T-cell (primary cell): ENCODE measurements at regions of chr12 and their contacts with region 1.

Region 1: DNA sequence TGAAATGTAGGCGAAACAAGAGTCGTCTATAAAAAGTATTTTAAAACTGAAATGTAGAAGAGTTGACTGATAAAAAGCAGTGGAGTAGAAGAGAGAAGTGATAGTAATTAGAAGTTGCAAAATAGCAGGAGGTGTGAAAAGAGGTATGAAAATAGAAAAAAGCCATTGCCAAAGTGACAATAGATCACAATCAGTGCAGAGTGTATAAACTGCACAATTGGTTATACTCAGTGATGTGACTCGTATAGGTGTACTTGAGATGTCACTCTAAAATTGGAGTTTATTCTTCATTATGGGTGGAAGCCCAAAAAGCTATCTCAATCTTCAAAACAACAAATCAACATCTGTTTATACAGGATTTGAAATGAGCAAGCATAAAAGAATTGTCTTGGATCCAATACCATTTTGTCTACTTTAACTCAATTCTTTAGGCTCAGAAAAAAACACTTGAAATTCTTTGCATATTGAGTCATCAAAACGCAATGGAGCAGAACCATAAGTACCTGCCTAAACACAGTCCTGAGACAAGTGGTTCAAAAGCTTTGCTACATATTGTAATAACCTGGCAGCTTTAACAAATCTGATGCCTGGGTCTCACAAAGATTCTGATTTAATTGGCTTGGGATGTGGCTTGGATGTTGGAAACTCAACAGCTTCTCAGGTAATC is 8.8 kb downstream of the IKBIP start:
- DNase-seq: no peak
- ATAC-seq: no peak
- H3K4me3 ChIP-seq: no peak overlapping the region
- H3K4me3 Mint-ChIP-seq: no peak overlapping the region
- H3K27ac ChIP-seq: no peak overlapping the region
- H3K27ac Mint-ChIP-seq: no peak overlapping the region
- H3K4me1 ChIP-seq: no peaks in the 10 kb centered on the region
- H3K4me1 Mint-ChIP-seq: peaks cover 3 to 7% (median 4%) of the 10 kb centered on the region in 3 donors
- H3K27me3 ChIP-seq: no peaks in the 10 kb centered on the region
- H3K27me3 Mint-ChIP-seq: no peaks in the 10 kb centered on the region

Region 2: DNA sequence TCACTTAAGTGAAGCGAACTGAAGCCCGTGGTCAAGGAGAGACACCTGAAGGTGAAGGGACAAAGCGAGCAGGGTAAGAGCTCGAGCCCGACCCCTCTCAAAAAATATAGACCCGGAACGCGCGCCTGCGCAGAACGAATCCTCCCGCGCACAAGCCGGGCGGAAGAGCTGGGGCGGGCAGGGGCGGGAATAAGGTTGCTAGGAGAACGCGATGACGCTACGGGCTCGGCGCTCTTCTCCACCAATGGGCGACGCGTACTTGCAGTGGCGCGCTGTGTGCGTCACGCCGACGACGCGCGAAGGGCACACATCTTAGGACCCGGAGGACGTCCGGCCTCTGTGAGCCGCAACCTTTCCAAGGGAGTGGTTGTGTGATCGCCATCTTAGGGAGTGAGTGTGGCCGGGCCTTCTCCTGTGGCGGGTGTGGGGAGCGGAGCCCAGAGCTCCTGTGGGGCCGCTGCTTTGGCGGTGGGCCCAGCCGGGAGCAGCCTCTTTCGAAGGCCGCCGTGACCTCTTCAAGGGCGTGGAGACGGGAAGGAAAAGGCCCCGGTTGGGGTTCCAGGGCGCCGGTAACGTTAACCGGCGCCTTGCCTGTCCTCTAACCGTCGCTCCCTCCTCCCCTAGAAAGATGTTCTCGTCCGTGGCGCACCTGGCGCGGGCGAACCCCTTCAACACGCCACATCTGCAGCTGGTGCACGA is 42.3 kb before region 1 on chr12 and contains the start of gene SLC25A3:
- CTCF ChIA-PET with region 1: interaction called in 1 of 2 experiments, 4 read pairs
- POLR2A ChIA-PET with region 1: interaction called, 7 to 10 read pairs
- DNase-seq: peak; percentile 82 to 99 (median 93)
- ATAC-seq: peak; percentile 96 to 98 (median 98)
- H3K4me3 ChIP-seq: peak within 1 kb of the TSS; percentile 85 to 97
- H3K4me3 Mint-ChIP-seq: peak within 1 kb of the TSS; percentile 90 to 95 (median 91)
- H3K27ac ChIP-seq: peak within 1 kb of the TSS; percentile 94
- H3K27ac Mint-ChIP-seq: peak within 1 kb of the TSS; percentile 95 to 99
- H3K4me1 ChIP-seq: peaks cover 18 to 21% of the 10 kb centered on the region in 2 experiments
- H3K4me1 Mint-ChIP-seq: peaks cover 27 to 43% (median 35%) of the 10 kb centered on the region in 3 donors
- H3K27me3 ChIP-seq: no peaks in the 10 kb centered on the region
- H3K27me3 Mint-ChIP-seq: no peaks in the 10 kb centered on the region
- total RNA-seq, gene SLC25A3: 256 to 438 (median 269) TPM

Region 3: GRCh38 chr12:98618952-98619351 is 16.8 kb before region 1 on chr12:
- CTCF ChIA-PET with region 1: no interaction called
- POLR2A ChIA-PET with region 1: interaction called in 1 of 2 experiments, 11 read pairs
- DNase-seq: no peak
- ATAC-seq: no peak
- H3K4me3 ChIP-seq: no peak overlapping the region
- H3K4me3 Mint-ChIP-seq: no peak overlapping the region
- H3K27ac ChIP-seq: no peak overlapping the region
- H3K27ac Mint-ChIP-seq: no peak overlapping the region
- H3K4me1 ChIP-seq: no peaks in the 10 kb centered on the region
- H3K4me1 Mint-ChIP-seq: peaks cover 0 to 3% (median 0%) of the 10 kb centered on the region in 3 donors
- H3K27me3 ChIP-seq: no peaks in the 10 kb centered on the region
- H3K27me3 Mint-ChIP-seq: no peaks in the 10 kb centered on the region